A673 (cell line): ENCODE measurements at regions of chr2 and their contacts with region 1.

Region 1: GRCh38 chr2:75130171-75130570 is 69.1 kb downstream of the TACR1 start:
- DNase-seq: peak; percentile 49
- H3K4me3 ChIP-seq: no peak overlapping the region
- H3K27ac ChIP-seq: no peak overlapping the region
- H3K4me1 ChIP-seq: peaks cover 13% of the 10 kb centered on the region
- H3K27me3 ChIP-seq: no peaks in the 10 kb centered on the region
- CTCF ChIP-seq: peak; percentile 50

Region 2: GRCh38 chr2:75290600-75291150 is 160.5 kb after region 1 on chr2:
- CTCF ChIA-PET with region 1: interaction called, 13 read pairs
- POLR2A ChIA-PET with region 1: no interaction called
- intact Hi-C with region 1: no loop called
- DNase-seq: peak; percentile 69
- H3K4me3 ChIP-seq: no peak overlapping the region
- H3K27ac ChIP-seq: no peak overlapping the region
- H3K4me1 ChIP-seq: peaks cover 10% of the 10 kb centered on the region
- H3K27me3 ChIP-seq: no peaks in the 10 kb centered on the region
- CTCF ChIP-seq: peak; percentile 59